BJ (cell line): ENCODE measurements at regions of chr14 and their contacts with region 1.

Region 1: GRCh38 chr14:50860478-50861086 is 11.3 kb upstream of the ABHD12B start:
- DNase-seq: peak; percentile 25
- H3K4me3 ChIP-seq: peak overlapping the region; percentile 41
- H3K27me3 ChIP-seq: no peaks in the 10 kb centered on the region
- CTCF ChIP-seq: peak; percentile 75

Region 2: GRCh38 chr14:50599700-50600444 is 260.7 kb before region 1 on chr14:
- CTCF ChIA-PET with region 1: interaction called, 26 read pairs
- POLR2A ChIA-PET with region 1: no interaction called
- DNase-seq: no peak
- H3K4me3 ChIP-seq: no peak overlapping the region
- H3K27me3 ChIP-seq: no peaks in the 10 kb centered on the region
- CTCF ChIP-seq: peak; percentile 63

Region 3: DNA sequence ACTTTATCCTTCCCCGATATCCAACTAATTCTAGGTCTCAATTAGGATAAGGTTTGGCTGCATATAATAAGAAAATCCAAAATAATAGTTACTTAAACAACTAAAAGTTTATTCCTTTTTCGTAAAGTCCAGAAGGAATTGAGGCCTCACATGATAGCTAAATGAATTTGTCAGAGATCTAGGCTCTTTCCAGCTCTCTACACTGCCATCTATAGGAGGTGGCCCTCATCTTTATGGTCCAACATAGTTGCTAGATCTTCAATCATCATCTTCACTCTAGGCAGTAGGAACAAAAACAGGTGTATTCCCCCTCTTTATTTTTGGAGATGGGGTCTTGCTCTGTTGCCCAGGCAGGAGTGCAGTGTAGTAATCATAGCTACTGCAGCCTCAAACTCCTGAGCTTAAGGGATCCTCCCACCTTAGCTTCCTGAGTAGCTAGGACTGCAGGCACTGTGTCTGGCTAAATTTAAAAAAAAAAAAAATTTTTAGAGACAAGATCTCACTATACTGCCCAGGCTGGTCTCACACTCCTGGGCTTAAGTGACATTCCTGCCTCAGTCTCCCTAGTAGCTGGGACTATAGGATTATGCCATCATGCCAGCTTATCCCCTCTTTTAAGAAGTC is 146.0 kb before region 1 on chr14:
- CTCF ChIA-PET with region 1: no interaction called
- POLR2A ChIA-PET with region 1: interaction called, 18 read pairs
- DNase-seq: no peak
- H3K4me3 ChIP-seq: no peak overlapping the region
- H3K27me3 ChIP-seq: no peaks in the 10 kb centered on the region
- CTCF ChIP-seq: peak; percentile 25; the same call in 1 of the 2 replicates

Region 4: DNA sequence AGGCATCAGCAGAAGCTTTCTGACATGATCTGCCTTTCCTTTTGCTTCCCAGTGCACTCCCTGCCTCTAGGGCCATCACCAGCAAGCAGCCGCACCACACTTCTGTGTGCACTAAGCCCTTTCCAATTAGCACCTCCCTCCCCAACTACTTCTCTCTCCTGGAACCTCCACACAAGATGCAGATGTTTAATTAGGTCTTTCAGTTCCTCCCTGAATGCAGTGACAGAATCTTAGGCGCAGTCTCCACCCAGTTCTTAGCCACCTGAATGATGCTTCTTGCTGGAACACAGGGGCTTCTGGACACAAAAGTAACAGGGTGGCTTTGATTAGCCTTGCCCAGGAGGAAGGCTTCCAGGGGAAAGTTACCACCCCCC is 62.5 kb before region 1 on chr14:
- CTCF ChIA-PET with region 1: interaction called, 19 read pairs
- POLR2A ChIA-PET with region 1: no interaction called
- DNase-seq: no peak
- H3K4me3 ChIP-seq: no peak overlapping the region
- H3K27me3 ChIP-seq: no peaks in the 10 kb centered on the region
- CTCF ChIP-seq: no peak

Region 5: DNA sequence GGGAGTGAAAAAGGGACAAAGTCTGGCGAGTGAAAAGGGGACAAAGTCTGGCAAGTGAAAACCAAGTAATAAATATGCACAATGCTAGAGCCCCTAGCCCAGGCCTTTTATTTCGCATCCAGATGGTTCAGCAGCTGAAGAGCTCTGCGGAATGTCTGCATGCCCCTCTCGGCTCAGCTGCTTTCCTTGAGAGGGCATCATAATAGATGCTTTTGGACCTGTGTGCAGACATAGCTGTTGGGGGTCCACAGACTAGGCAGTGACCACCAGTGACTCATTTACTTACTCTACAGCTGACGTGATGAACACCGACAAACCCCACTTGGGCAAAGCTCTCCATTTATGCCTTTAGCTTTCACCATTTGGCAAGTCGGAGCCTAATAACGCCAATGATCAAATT is 33.9 kb before region 1 on chr14:
- CTCF ChIA-PET with region 1: interaction called, 10 read pairs
- POLR2A ChIA-PET with region 1: no interaction called
- DNase-seq: no peak
- H3K4me3 ChIP-seq: no peak overlapping the region
- H3K27me3 ChIP-seq: no peaks in the 10 kb centered on the region
- CTCF ChIP-seq: no peak

Region 6: GRCh38 chr14:50846226-50846880 is 14.2 kb before region 1 on chr14:
- CTCF ChIA-PET with region 1: interaction called, 15 read pairs
- POLR2A ChIA-PET with region 1: no interaction called
- DNase-seq: peak; percentile 47
- H3K4me3 ChIP-seq: no peak overlapping the region
- H3K27me3 ChIP-seq: no peaks in the 10 kb centered on the region
- CTCF ChIP-seq: no peak

Region 7: DNA sequence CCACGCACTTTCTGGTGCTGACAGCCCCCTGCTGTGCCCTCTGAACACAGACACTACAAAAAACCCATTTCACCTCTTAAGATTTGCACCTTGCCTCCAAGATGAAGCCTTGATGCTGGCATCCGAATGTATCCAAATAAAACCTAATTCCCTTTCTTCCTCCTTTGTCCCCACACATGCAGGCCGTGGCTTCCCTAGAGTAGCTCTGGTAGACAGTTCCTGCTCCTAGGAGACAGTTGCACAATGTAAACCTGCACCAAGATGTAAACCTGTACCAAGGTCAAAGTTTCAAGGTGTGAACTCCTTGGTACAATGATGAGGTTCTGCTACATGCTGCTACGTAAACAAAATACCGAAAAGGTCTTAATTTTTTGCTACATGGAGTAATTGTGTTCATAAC is 10.6 kb after region 1 on chr14:
- CTCF ChIA-PET with region 1: interaction called, 11 read pairs
- POLR2A ChIA-PET with region 1: no interaction called
- DNase-seq: no peak
- H3K4me3 ChIP-seq: no peak overlapping the region
- H3K27me3 ChIP-seq: peaks cover 18% of the 10 kb centered on the region
- CTCF ChIP-seq: no peak

Region 8: GRCh38 chr14:50937325-50937724 is 76.7 kb after region 1 on chr14:
- CTCF ChIA-PET with region 1: no interaction called
- POLR2A ChIA-PET with region 1: no interaction called
- DNase-seq: peak; percentile 45
- H3K4me3 ChIP-seq: no peak overlapping the region
- H3K27me3 ChIP-seq: no peaks in the 10 kb centered on the region
- CTCF ChIP-seq: no peak

Region 9: DNA sequence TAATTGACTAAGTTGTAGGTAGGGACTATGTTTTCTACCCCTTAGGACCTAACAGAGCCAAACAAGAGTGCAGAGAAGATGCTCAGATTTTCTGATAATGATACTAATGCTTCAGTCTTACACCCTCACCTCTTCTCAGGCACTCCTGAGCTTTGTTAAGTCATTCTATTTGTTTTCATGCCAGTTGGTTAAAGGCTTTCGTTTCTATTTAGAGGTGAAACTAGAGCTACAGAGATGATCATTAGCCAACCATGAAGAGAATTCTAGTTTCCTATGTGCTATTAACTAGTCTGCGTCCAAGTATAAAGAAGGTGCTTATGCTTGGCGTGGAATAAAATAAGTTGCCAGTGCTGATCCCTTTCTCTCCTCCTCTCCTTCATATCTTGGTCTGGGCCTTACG is 118.3 kb after region 1 on chr14:
- CTCF ChIA-PET with region 1: no interaction called
- POLR2A ChIA-PET with region 1: no interaction called
- DNase-seq: no peak
- H3K4me3 ChIP-seq: no peak overlapping the region
- H3K27me3 ChIP-seq: peaks cover 19% of the 10 kb centered on the region
- CTCF ChIP-seq: no peak